CD8-positive, alpha-beta memory T cell (primary cell): ENCODE measurements at regions of chr6 and their contacts with region 1.

Region 1: DNA sequence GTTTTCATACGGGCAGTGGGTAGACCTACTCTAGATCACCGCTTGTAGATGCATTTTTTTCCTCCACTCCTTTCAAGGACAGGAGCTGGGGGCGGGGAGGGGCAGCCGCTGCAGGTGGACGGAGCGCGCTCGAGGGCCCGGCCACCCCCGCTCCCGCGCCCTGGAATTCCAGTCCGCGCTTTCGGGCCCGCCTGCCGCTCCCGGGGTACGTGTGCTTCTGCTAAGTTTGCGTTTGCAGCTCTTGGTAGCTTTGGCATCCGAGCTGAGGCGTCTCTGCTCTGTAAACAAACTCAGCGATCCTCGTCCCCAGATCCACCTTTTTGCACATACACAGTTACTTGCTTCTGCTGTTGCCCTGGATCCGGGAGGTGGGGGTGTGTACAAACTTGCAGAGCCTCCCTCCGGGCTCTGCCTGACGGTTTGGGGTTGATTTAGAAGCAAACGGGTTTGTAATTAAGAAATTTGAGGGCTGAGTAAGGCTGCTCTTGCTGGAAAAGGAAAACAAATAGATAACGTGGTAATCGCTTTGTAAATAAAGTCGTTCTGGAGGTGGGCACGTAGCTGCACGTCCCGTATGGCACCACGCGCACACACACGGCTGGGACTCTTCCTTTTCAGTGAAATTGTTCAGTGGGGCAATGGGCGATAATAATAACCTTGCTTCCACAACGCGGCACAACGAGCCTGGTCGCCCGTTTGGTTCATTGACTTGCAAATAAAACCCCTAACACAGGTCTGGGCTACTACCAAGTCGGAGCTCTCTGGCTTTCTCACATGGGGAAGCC is 976 bp upstream of the CITED2 start:
- DNase-seq: peak; percentile 74 to 91 (median 86)
- H3K4me3 ChIP-seq: peak overlapping the region; percentile 98
- H3K4me3 Mint-ChIP-seq: peak overlapping the region; percentile 94 to 100 (median 99)
- H3K27ac ChIP-seq: peak overlapping the region; percentile 96
- H3K27ac Mint-ChIP-seq: peak overlapping the region; percentile 93 to 98 (median 96)
- H3K4me1 ChIP-seq: peaks cover 26% of the 10 kb centered on the region
- H3K4me1 Mint-ChIP-seq: peaks cover 28 to 31% (median 29%) of the 10 kb centered on the region in 3 donors
- H3K27me3 ChIP-seq: no peaks in the 10 kb centered on the region
- H3K27me3 Mint-ChIP-seq: peaks cover 0 to 4% of the 10 kb centered on the region in 2 donors

Region 2: DNA sequence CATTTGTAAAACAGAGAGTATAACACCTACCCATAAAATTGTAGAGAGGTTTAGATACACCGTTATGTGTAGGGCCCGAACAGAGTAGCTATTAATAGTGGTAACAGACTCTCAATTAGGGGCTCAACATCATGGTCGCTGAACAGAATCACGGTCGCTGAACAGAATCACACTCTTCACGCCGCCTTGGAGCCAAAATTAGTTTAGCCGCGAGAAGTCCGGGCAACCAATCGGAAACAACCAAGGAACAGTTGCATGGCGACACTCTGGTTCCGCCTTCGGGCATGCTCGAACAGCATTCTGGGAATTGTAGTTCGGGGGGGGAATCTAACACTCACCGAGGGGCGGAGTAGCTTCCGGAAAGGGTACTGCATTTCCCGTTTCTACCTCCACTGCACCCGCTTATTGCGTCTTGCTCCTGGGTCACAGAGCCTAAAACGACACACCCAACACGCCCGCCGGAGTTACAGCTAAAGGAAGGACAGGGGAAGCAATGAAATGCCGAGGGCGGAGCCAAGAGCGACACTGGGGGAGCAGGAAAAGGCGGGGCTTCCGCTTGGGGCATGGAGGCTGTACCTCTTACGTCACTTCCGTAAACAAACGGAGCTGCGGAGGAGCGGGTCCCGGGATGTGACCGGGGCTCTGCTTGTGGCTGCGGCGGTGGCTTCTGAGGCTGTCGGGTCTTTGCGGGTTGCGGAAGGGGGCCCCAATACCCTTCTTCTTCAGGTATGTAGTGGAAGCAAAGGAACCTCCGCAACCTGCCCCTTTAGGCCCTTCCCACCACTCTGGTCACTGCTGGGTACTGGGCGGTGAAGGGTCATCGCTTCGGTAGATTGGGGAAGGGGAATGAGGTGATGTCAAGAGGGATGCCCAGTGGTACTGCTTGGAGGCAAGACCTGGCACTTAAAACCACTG is 602.0 kb before region 1 on chr6 and contains the start of gene CCDC28A:
- CTCF ChIA-PET with region 1: no interaction called
- POLR2A ChIA-PET with region 1: interaction called, 10 read pairs
- DNase-seq: peak; percentile 88 to 96 (median 95)
- H3K4me3 ChIP-seq: peak within 1 kb of the TSS; percentile 99
- H3K4me3 Mint-ChIP-seq: peak within 1 kb of the TSS; percentile 95 to 100 (median 99)
- H3K27ac ChIP-seq: peak within 1 kb of the TSS; percentile 97
- H3K27ac Mint-ChIP-seq: peak within 1 kb of the TSS; percentile 95 to 100 (median 100)
- H3K4me1 ChIP-seq: peaks cover 13% of the 10 kb centered on the region
- H3K4me1 Mint-ChIP-seq: peaks cover 31 to 44% (median 44%) of the 10 kb centered on the region in 3 donors
- H3K27me3 ChIP-seq: no peaks in the 10 kb centered on the region
- H3K27me3 Mint-ChIP-seq: peaks cover 0 to 3% of the 10 kb centered on the region in 2 donors
- total RNA-seq, gene CCDC28A: 15.1 to 16.1 TPM

Region 3: DNA sequence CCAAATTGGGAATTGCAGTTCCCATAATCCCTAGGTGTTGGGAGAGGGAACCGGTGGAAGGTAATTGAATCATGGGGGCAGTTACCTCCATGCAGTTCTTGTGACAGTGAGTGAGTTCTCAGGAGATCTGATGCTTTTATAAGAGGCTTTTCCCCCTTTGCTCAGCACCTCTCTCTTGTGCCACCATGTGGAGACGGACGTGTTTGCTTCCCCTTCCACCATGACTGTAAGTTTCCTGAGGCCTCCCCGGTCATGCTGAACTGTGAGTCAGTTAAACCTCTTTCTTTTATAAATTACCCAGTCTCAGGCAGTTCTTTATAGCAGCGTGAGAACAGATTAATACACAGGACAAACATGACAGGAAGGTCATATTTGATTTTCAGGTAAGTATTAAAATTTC is 265.9 kb before region 1 on chr6:
- CTCF ChIA-PET with region 1: interaction called, 19 read pairs
- POLR2A ChIA-PET with region 1: interaction called, 14 read pairs
- DNase-seq: peak in 1 of 5 donors; percentile 48
- H3K4me3 ChIP-seq: no peak overlapping the region
- H3K4me3 Mint-ChIP-seq: peak overlapping the region in 1 of 7 donors; percentile 40
- H3K27ac ChIP-seq: no peak overlapping the region
- H3K27ac Mint-ChIP-seq: peak overlapping the region in 6 of 8 donors; percentile 15 to 57 (median 32)
- H3K4me1 ChIP-seq: peaks cover 47% of the 10 kb centered on the region
- H3K4me1 Mint-ChIP-seq: peaks cover 49 to 59% (median 58%) of the 10 kb centered on the region in 3 donors
- H3K27me3 ChIP-seq: no peaks in the 10 kb centered on the region
- H3K27me3 Mint-ChIP-seq: peaks cover 0 to 3% of the 10 kb centered on the region in 2 donors

Region 4: DNA sequence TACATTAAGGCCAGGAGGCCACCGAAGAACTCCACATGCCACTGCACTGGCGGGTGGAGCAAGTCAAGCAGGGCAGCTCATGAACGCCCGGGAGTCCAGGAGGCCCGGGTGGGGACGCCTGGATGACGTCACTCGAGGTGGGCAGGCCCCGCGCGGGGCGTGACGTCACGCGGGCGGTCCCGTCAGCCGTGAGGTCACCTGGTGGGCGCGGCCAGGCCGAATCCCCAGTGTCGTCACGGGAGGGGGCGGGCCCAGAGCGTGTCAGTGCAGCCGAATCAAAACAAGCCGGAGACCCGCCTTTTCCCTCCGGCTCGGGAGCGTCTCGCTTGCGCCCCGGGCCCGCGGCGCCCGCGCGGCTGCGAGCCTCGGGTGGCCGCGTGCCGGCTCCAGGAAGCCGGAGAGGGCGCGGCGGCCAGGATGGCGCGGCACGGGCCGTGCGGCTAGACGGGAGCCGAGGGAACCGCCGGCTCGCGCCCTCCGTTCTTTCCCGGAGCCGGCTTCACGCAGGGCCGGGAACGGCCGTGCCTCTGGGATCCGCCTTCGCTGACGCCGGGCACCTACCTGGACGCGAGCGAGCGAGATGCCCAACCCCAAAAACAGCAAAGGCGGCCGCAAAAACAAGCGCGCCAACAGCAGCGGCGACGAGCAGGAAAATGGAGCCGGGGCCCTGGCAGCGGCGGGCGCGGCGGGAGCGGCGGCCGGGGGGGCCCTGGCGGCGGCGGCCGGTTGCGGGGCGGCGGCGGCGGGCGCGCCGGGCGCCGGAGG is 240.4 kb before region 1 on chr6 and contains the start of gene HECA:
- CTCF ChIA-PET with region 1: interaction called, 15 read pairs
- POLR2A ChIA-PET with region 1: interaction called, 6 read pairs
- DNase-seq: peak; percentile 99 to 100 (median 100)
- H3K4me3 ChIP-seq: peak within 1 kb of the TSS; percentile 86
- H3K4me3 Mint-ChIP-seq: peak within 1 kb of the TSS; percentile 85 to 97 (median 93)
- H3K27ac ChIP-seq: peak within 1 kb of the TSS; percentile 92
- H3K27ac Mint-ChIP-seq: peak within 1 kb of the TSS; percentile 98 to 100 (median 98)
- H3K4me1 ChIP-seq: peaks cover 50% of the 10 kb centered on the region
- H3K4me1 Mint-ChIP-seq: peaks cover 59 to 76% (median 66%) of the 10 kb centered on the region in 3 donors
- H3K27me3 ChIP-seq: no peaks in the 10 kb centered on the region
- H3K27me3 Mint-ChIP-seq: peaks cover 0 to 2% of the 10 kb centered on the region in 2 donors
- total RNA-seq, gene HECA: 63.4 to 64.6 TPM

Region 5: GRCh38 chr6:139291813-139292619 is 83.4 kb before region 1 on chr6 and contains the start of gene TXLNB:
- CTCF ChIA-PET with region 1: interaction called, 23 read pairs
- POLR2A ChIA-PET with region 1: interaction called, 28 read pairs
- DNase-seq: peak; percentile 54 to 90 (median 82)
- H3K4me3 ChIP-seq: peak within 1 kb of the TSS; percentile 42
- H3K4me3 Mint-ChIP-seq: peak within 1 kb of the TSS; percentile 73 to 91 (median 85)
- H3K27ac ChIP-seq: peak within 1 kb of the TSS; percentile 77
- H3K27ac Mint-ChIP-seq: peak within 1 kb of the TSS; percentile 84 to 98 (median 96)
- H3K4me1 ChIP-seq: peaks cover 43% of the 10 kb centered on the region
- H3K4me1 Mint-ChIP-seq: peaks cover 60 to 81% (median 69%) of the 10 kb centered on the region in 3 donors
- H3K27me3 ChIP-seq: no peaks in the 10 kb centered on the region
- H3K27me3 Mint-ChIP-seq: peaks cover 0 to 2% of the 10 kb centered on the region in 2 donors
- total RNA-seq, gene TXLNB: 0.13 to 0.47 TPM

Region 6: DNA sequence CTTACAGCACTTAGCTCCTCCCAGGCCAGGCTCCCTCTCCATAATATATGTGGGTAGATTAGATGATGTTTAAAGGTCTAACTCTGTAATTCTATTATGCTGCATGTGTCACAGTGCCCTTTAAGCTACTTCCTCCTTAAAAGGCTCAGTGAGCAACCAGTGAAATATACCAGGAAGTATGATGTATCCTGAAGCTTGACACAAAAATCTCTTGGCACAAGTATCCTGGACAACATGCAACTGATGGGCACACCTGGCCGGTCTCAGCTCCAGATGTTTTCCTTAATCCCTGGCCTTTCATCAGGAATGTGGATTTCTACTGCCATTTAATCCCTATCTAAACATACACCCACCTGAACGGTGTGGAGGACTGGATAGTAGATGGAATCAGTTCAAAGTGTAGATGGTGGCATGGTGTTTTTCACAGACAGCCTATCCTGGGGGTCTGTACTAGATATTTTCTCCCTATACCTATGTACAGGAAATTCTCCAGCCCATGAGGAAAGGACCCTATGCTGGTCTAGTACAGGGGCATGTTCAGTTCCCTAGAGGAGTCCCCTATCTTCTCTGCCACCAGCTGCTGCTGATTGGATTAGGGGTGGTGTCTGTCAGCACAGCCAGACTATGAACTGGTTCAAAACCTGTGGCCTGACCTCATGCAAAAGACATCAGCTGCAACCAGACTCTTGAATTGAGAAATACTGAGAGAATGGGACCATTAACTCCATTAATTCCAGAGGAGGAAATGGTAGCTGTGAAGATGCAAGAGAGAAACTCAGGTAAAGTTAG is 58.4 kb after region 1 on chr6:
- CTCF ChIA-PET with region 1: no interaction called
- POLR2A ChIA-PET with region 1: no interaction called
- DNase-seq: no peak
- H3K4me3 ChIP-seq: no peak overlapping the region
- H3K4me3 Mint-ChIP-seq: no peak overlapping the region
- H3K27ac ChIP-seq: no peak overlapping the region
- H3K27ac Mint-ChIP-seq: no peak overlapping the region
- H3K4me1 ChIP-seq: no peaks in the 10 kb centered on the region
- H3K4me1 Mint-ChIP-seq: peaks cover 0 to 6% (median 0%) of the 10 kb centered on the region in 3 donors
- H3K27me3 ChIP-seq: no peaks in the 10 kb centered on the region
- H3K27me3 Mint-ChIP-seq: peaks cover 0 to 3% of the 10 kb centered on the region in 2 donors

Region 7: GRCh38 chr6:139533573-139534471 is 158.4 kb after region 1 on chr6:
- CTCF ChIA-PET with region 1: interaction called, 22 read pairs
- POLR2A ChIA-PET with region 1: interaction called, 32 read pairs
- DNase-seq: no peak
- H3K4me3 ChIP-seq: no peak overlapping the region
- H3K4me3 Mint-ChIP-seq: peak overlapping the region; percentile 44 to 86 (median 76)
- H3K27ac ChIP-seq: peak overlapping the region; percentile 38
- H3K27ac Mint-ChIP-seq: peak overlapping the region; percentile 74 to 99 (median 93)
- H3K4me1 ChIP-seq: peaks cover 25% of the 10 kb centered on the region
- H3K4me1 Mint-ChIP-seq: peaks cover 57 to 83% (median 82%) of the 10 kb centered on the region in 3 donors
- H3K27me3 ChIP-seq: no peaks in the 10 kb centered on the region
- H3K27me3 Mint-ChIP-seq: no peaks in the 10 kb centered on the region